Right ventricle myocardium superior (tissue), 1 donor: ENCODE measurements at regions of chr18 and their contacts with region 1.

Region 1: GRCh38 chr18:58043491-58044379 is at the start of gene NEDD4L:
- DNase-seq: peak; percentile 87
- ATAC-seq: peak; percentile 92
- total RNA-seq, gene NEDD4L: 51.4 TPM

Region 2: DNA sequence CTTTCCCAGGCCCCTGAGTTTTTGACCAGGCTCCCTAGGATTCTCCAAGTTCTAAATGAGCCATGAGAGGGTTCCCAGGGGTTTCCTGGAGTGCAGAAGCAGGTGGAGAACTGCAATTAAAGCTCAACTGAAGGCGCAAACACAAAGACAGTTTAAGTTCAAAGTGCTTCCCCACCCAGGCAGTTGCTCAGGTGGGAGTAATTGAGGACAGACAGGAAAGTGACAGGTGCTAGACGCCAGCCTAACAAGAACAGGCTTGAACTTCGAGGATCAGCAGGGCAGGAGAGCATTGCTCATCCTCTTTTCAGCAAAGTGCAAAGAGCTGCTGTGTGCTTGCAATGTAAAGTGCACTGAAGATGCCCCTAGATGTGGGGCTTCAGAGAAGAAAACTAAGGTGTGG is 768.6 kb before region 1 on chr18:
- intact Hi-C with region 1: no loop called
- DNase-seq: no peak
- ATAC-seq: no peak

Region 3: DNA sequence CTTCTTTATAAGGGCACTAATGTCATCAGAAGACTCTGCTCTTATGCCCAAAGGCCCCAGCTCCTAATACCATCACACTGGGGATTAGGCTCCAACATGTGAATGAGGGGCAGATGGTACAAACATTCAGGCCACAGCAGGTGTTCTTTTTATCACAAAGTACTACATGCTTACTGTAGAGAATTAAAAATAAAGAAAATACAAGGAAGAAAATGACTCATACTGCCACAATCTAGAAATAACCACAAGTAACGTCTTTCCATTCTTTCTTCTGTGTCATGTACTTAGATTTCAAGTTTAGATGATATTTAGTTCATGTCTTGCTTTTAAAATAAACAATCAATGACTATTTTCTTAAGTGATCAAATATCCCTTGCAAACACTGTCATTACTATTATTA is 100.0 kb before region 1 on chr18:
- intact Hi-C with region 1: no loop called
- DNase-seq: no peak
- ATAC-seq: no peak

Region 4: DNA sequence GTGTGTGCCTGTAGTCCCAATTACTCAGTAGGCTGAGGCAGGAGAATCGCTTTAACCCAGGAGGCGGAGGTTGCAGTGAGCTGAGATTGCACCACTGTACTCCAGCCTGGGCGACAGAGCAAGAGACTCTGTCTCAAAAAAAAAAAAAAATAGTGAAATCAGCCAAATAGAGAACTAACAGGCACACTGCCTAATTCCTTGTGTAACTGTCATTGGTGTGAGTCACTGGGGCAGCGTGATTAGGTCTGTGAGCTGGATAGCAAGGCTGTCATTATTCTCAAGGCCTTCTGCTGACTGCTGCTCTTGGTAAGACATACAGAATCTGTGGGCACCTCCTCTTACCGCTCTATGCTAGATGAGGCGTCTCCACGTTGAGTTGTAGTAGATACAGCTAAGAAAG is 270.5 kb after region 1 on chr18:
- intact Hi-C with region 1: loop called (anchors 10 kb)
- DNase-seq: peak; percentile 54
- ATAC-seq: peak; percentile 74